Aorta (tissue), 5 donors: ENCODE measurements at regions of chr6 and their contacts with region 1.

Region 1: GRCh38 chr6:141133346-141133745 is 999.4 kb upstream of the GJE1 start:
- DNase-seq: no peak
- ATAC-seq: no peak
- H3K4me3 ChIP-seq: no peak overlapping the region
- H3K27ac ChIP-seq: no peak overlapping the region
- H3K4me1 ChIP-seq: peaks cover 3 to 5% of the 10 kb centered on the region in 2 donors
- H3K27me3 ChIP-seq: no peaks in the 10 kb centered on the region

Region 2: DNA sequence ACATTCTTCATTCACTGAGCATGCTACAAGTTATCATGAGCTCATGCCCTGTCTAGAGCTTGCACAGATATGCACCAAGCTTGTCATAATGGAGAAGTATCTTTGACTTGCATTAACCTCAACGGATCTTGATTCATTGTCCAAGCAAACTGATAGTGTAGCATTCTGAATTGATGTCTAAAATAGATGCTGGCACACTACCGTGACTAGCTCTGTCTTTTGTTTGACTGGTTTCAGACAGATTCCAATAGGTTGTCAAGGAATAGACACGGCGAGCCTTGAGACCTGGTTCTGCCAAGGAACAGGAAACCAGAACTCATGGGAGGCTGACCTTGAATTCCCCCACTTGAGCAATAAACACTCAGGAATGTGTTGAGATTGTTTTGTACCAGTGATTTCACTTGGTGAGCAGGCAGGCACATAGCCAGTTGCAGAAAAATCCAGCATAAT is 153.7 kb before region 1 on chr6:
- intact Hi-C with region 1: loop called in 1 of 2 experiments (anchors 10 kb)
- DNase-seq: peak in 1 of 2 donors; percentile 62
- ATAC-seq: peak; percentile 82
- H3K4me3 ChIP-seq: no peak overlapping the region
- H3K27ac ChIP-seq: peak overlapping the region in 1 of 2 donors; percentile 67
- H3K4me1 ChIP-seq: no peaks in the 10 kb centered on the region
- H3K27me3 ChIP-seq: no peaks in the 10 kb centered on the region

Region 3: DNA sequence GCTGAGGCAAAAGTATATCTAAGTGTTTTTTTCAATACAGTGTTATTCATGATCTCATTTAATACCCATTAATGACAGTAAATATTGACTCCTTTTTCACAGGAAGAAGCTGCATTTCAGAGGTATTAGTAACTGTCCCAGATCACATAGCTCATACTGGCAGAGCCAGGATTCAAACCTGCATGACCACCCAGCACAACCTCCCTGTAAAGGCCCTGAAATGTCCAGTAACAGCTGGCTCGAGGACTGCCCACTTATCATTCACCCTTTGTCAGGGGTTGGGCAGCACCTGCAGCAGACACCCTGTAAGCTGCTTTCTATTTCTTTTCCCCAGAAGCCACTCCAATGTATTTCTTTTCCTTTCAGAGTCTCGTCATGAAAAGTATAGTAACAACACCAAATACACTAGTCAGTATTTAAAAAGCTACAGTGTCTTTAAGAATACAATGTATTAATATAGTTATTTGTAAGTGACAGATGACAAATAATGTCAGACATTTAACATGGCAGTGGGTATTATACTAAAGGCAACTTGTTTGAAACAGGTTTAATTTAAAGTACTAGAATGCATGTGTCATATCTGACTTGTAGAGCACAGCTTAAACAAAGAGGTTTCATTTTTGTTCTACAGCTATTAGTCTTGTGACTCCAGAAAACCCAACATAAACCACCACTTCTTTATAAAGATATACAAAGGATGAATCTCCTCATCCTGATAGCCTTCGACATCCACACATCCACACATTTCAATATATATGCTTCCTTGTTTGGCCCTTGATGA is 157.8 kb after region 1 on chr6:
- intact Hi-C with region 1: no loop called
- DNase-seq: no peak
- ATAC-seq: no peak
- H3K4me3 ChIP-seq: no peak overlapping the region
- H3K27ac ChIP-seq: no peak overlapping the region
- H3K4me1 ChIP-seq: no peaks in the 10 kb centered on the region
- H3K27me3 ChIP-seq: no peaks in the 10 kb centered on the region